ENCODE measurements at regions of chr20 and their contacts with region 1.

Region 1: DNA sequence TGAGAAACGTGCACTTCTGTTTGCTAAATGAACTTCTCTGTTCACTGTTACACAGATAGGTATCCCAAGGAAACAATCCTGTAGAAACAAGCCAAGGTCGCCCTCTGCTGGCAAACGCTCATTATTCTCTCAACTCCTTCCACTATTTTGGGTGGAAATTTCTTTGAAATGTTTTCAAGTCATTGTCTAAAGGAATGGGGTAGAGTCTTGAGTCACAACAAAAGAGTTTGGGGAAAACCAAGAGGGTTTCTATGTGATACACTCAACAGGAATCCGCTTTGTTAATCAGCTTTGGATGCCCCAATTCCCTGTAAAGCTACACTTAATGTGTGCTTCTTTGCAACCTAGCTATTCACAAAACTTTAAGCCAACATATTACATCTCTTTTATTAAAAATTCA is 4.6 kb upstream of the RAE1 start:
- DNase-seq: peak; percentile 77
- H3K4me3 ChIP-seq: no peak overlapping the region
- H3K27ac ChIP-seq: no peak overlapping the region
- H3K27me3 ChIP-seq: no peaks in the 10 kb centered on the region
- CTCF ChIP-seq: peak; percentile 84

Region 2: GRCh38 chr20:57089691-57090150 is 256.8 kb before region 1 on chr20:
- in situ Hi-C with region 1: loop called (anchors 25 kb)
- DNase-seq: peak; percentile 27
- H3K4me3 ChIP-seq: no peak overlapping the region
- H3K27ac ChIP-seq: no peak overlapping the region
- H3K27me3 ChIP-seq: peaks cover 1% of the 10 kb centered on the region
- CTCF ChIP-seq: peak; percentile 96